BJ (cell line): ENCODE measurements at regions of chr6 and their contacts with region 1.

Region 1: DNA sequence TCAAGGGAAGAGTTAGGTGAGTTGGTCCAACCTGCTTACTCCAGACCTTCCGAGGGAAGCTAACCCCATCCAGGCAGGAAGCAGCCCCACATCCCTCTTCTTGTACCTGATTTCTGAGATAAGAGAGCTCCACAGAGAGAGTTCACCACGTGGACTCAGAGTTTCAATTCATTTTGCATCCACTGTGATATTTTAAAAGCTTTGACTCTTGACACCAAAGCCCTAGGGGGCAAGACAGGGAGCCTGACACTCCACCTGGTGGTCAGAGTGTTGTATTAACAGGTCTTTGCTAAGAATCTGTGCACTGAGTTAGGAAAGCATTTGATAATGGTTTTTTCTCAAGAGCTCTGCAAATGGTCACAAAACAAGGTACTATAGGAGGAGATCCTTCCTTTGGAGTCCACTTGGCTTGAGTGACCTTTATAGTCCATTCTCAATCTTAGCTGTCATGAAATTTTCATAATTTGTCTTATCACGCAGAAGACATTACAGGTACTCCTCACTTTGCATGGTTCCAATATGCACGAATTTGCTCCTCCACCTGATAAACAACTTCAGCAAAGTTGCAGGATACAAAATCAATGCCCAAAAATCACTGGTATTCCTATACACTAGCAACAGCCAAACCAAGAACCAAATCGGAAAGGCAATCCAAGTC is 56.2 kb upstream of the RIPOR2 start:
- DNase-seq: no peak
- H3K4me3 ChIP-seq: no peak overlapping the region
- H3K27me3 ChIP-seq: no peaks in the 10 kb centered on the region
- CTCF ChIP-seq: peak; percentile 76

Region 2: GRCh38 chr6:24223115-24223919 is 768.6 kb before region 1 on chr6:
- CTCF ChIA-PET with region 1: no interaction called
- POLR2A ChIA-PET with region 1: no interaction called
- DNase-seq: no peak
- H3K4me3 ChIP-seq: no peak overlapping the region
- H3K27me3 ChIP-seq: no peaks in the 10 kb centered on the region
- CTCF ChIP-seq: no peak

Region 3: DNA sequence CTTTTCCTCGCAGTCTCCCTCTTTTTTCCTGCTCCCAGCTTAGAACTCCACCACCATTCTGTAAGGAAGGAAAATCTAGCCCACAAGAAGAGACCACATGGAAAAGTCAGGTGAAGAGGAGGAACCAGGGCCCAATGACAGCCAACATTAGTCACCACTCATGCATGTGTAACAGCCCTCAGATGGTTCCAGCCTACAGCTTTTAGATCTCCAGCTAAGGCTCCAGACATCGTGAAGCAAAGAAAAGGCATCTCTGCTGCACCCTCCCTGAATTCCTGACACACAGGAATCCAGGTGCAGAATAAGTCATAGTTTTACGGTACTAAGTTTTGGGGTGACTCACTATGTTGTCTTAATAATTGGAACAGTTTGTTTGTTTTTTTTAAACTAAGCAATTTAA is 659.6 kb before region 1 on chr6:
- CTCF ChIA-PET with region 1: no interaction called
- POLR2A ChIA-PET with region 1: no interaction called
- DNase-seq: no peak
- H3K4me3 ChIP-seq: no peak overlapping the region
- H3K27me3 ChIP-seq: no peaks in the 10 kb centered on the region
- CTCF ChIP-seq: no peak

Region 4: GRCh38 chr6:24855395-24856245 is 136.3 kb before region 1 on chr6:
- CTCF ChIA-PET with region 1: interaction called, 65 read pairs
- POLR2A ChIA-PET with region 1: no interaction called
- DNase-seq: no peak
- H3K4me3 ChIP-seq: no peak overlapping the region
- H3K27me3 ChIP-seq: no peaks in the 10 kb centered on the region
- CTCF ChIP-seq: peak; percentile 77

Region 5: DNA sequence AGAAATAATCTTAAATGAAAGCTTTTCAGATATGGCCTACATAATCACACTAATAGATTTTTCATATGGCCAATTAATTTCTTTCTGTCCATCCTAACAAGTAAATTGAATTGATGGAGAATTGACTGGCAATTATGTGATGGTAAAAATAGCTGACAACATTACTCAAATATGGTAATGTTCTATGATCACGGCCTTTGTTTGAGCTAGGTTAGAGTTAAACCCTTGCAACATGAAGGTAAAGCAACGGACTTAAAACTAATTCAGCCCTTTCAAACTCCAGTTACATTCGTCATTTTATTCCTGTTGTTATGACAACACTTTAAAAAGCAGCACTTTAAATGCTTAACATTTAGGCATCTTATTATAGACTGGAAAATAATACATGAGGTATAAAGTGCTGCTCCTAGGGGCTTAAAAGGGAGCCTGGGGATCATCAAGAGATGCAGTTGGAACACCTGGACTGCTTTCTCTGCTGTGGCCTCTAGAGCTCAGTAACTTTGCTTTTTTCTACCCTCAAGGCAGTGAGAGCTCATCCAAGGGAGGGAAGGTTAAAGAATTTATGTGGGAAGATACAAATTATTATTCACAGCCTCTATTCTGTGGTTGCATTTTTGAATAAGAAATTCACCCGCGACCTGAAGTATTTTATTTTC is 103.1 kb before region 1 on chr6:
- CTCF ChIA-PET with region 1: interaction called, 15 read pairs
- POLR2A ChIA-PET with region 1: no interaction called
- DNase-seq: no peak
- H3K4me3 ChIP-seq: no peak overlapping the region
- H3K27me3 ChIP-seq: no peaks in the 10 kb centered on the region
- CTCF ChIP-seq: no peak

Region 6: GRCh38 chr6:24919004-24919892 is 72.7 kb before region 1 on chr6:
- CTCF ChIA-PET with region 1: interaction called, 11 read pairs
- POLR2A ChIA-PET with region 1: no interaction called
- DNase-seq: no peak
- H3K4me3 ChIP-seq: no peak overlapping the region
- H3K27me3 ChIP-seq: no peaks in the 10 kb centered on the region
- CTCF ChIP-seq: no peak

Region 7: GRCh38 chr6:24980507-24981387 is 11.2 kb before region 1 on chr6:
- CTCF ChIA-PET with region 1: interaction called, 57 read pairs
- POLR2A ChIA-PET with region 1: interaction called, 3 read pairs
- DNase-seq: no peak
- H3K4me3 ChIP-seq: no peak overlapping the region
- H3K27me3 ChIP-seq: no peaks in the 10 kb centered on the region
- CTCF ChIP-seq: no peak

Region 8: DNA sequence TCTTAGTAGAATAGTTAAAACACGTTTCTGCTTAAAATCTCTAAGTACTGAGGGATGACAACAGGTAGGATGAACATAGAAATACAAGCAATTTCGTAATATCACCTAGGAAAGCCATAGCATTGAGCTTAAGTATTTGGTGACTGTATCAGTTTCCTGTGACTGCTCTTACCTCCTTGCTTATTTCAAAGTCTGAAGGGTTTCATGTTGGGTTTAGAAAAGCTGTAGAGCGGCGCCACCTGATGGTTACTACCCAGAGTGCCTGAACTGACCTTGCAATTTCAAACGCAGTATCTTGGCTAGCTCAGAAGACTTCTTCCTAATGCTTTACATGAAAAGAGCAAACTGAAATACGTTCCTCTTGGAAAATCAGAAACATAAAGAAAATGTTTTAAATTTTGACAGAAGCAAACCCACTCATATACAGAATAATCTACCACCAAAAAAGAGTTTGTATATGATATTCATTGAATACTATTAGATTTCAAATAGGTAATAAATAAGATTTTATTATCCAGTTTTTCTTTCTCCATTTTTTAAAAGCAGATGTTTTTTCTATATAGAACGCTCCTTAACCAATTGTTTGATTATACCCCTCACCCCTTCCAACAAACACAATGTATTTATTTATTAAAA is 26.1 kb after region 1 on chr6:
- CTCF ChIA-PET with region 1: interaction called, 15 read pairs
- POLR2A ChIA-PET with region 1: no interaction called
- DNase-seq: no peak
- H3K4me3 ChIP-seq: no peak overlapping the region
- H3K27me3 ChIP-seq: no peaks in the 10 kb centered on the region
- CTCF ChIP-seq: peak; percentile 67

Region 9: DNA sequence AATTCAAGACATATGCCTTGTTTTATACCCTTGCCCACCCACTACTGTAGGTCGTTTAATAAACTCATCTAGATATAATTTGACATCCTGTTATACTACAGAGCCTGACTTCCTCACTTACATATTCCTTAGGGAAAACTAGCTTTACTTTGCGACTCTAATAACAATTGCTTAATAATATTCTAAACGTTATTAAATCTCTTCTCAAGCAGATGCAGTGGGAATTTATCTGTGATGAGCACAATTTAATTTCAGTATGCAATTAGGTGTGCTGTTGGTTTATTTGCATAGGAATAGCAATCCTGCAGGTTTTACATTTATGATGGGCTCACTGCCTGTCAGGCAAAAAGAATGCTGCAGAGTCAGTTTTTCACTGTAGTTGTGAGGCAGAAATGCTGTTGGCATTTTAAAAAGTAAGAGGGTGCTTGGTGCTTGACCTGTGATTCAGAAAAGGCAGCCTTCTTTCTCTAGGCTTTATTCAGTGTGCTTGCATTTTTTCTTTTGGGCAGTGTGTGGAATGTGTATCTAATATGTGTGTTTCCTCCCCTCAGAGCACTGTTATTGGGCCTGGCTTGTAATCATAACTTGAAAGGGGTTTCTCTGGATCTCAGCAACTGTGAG is 507.8 kb after region 1 on chr6:
- CTCF ChIA-PET with region 1: no interaction called
- POLR2A ChIA-PET with region 1: no interaction called
- DNase-seq: no peak
- H3K4me3 ChIP-seq: no peak overlapping the region
- H3K27me3 ChIP-seq: no peaks in the 10 kb centered on the region
- CTCF ChIP-seq: no peak